Activated CD8-positive, alpha-beta T cell treated with anti-CD3 and anti-CD28 coated beads for 36 hours (primary cell): ENCODE measurements at regions of chr3 and their contacts with region 1.

Region 1: DNA sequence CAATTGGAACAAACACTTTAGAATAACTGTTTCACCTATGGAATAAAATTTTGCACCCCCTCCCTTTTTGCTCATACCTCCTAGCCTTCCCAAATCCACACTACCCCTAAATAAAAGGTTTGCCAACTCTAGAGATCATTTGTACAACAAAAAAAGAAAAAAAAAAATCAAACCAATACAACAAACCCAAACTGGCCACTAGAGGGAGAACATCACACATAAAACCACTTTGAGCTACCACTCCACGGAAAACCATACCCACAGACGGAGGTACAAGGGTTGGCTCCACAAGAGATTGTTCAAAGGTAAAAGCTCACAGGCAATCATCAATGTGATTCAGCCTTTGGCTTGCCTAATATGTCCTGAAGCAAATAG is 47.6 kb downstream of the SETMAR start:
- DNase-seq: peak; percentile 60
- ATAC-seq: peak; percentile 71
- H3K4me3 Mint-ChIP-seq: peak overlapping the region; percentile 67
- H3K27ac Mint-ChIP-seq: peak overlapping the region; percentile 40
- H3K4me1 Mint-ChIP-seq: peaks cover 19% of the 10 kb centered on the region
- H3K27me3 Mint-ChIP-seq: no peaks in the 10 kb centered on the region
- CTCF ChIP-seq: peak; percentile 93

Region 2: DNA sequence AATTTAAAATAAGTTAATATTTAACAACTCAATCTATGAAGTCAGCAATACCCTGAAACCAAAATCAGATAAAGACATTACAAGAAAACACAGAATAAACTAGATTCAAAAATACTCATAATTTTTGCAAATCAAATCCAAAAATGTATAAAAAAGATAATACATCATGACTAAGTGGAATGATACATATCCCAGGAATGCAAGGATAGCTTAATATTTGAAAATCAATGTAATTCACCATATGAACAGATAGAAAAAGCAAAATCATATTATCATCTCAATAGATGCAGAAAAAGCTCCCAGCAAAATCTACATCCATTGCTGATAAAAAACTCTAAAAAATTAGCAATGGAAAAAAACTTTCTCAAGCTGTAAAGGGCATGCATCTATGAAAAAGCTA is 22.9 kb after region 1 on chr3:
- CTCF ChIA-PET with region 1: interaction called, 13 read pairs
- POLR2A ChIA-PET with region 1: no interaction called
- intact Hi-C with region 1: no loop called
- DNase-seq: no peak
- ATAC-seq: no peak
- H3K4me3 Mint-ChIP-seq: no peak overlapping the region
- H3K27ac Mint-ChIP-seq: no peak overlapping the region
- H3K4me1 Mint-ChIP-seq: no peaks in the 10 kb centered on the region
- H3K27me3 Mint-ChIP-seq: no peaks in the 10 kb centered on the region
- CTCF ChIP-seq: no peak

Region 3: DNA sequence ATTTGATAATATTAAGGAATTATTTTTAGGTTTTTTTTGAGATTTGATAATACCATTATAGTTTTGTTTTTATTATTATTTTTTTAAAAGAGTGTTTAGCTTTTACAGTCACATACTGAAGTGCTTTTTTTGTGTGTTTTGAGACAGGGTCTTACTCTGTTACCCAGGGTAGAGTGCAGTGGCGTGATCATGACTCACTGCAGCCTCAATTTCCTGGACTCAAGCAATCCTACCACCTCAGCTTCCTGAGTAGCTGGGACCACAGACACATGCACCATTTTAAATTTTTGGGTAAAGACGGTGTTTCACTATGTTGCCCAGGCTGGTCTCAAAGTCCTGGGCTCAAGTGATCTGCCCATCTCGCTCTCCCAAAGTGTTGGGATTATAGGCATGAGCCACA is 43.3 kb after region 1 on chr3:
- CTCF ChIA-PET with region 1: interaction called, 13 read pairs
- POLR2A ChIA-PET with region 1: interaction called, 4 read pairs
- intact Hi-C with region 1: no loop called
- DNase-seq: peak; percentile 66
- ATAC-seq: peak; percentile 78
- H3K4me3 Mint-ChIP-seq: no peak overlapping the region
- H3K27ac Mint-ChIP-seq: peak overlapping the region; percentile 84
- H3K4me1 Mint-ChIP-seq: peaks cover 41% of the 10 kb centered on the region
- H3K27me3 Mint-ChIP-seq: no peaks in the 10 kb centered on the region
- CTCF ChIP-seq: no peak

Region 4: DNA sequence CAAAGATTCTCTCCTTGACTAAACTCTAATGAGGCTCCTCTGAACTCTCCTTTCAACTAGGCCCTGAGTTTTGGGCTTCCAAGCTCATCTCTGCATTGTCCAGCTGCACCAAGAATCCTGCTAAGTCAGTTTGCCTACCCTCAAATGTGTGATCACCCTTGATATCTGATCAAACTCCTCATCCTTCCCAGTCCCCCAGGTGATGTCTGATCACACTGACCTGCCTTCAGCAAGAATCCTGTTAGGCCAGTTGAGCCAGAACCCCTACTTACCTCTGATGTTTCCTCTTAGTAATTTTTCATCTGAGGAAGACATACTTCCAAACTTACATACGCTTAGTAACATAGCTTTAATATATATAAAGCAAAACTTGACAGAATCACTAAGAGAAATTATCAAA is 87.5 kb after region 1 on chr3:
- CTCF ChIA-PET with region 1: interaction called, 10 read pairs
- POLR2A ChIA-PET with region 1: interaction called, 4 read pairs
- intact Hi-C with region 1: no loop called
- DNase-seq: no peak
- ATAC-seq: no peak
- H3K4me3 Mint-ChIP-seq: no peak overlapping the region
- H3K27ac Mint-ChIP-seq: no peak overlapping the region
- H3K4me1 Mint-ChIP-seq: no peaks in the 10 kb centered on the region
- H3K27me3 Mint-ChIP-seq: no peaks in the 10 kb centered on the region
- CTCF ChIP-seq: no peak

Region 5: GRCh38 chr3:4584456-4585249 is 233.9 kb after region 1 on chr3:
- CTCF ChIA-PET with region 1: interaction called, 17 read pairs
- POLR2A ChIA-PET with region 1: no interaction called
- intact Hi-C with region 1: no loop called
- DNase-seq: peak; percentile 58
- ATAC-seq: peak; percentile 81
- H3K4me3 Mint-ChIP-seq: peak overlapping the region; percentile 70
- H3K27ac Mint-ChIP-seq: peak overlapping the region; percentile 89
- H3K4me1 Mint-ChIP-seq: peaks cover 78% of the 10 kb centered on the region
- H3K27me3 Mint-ChIP-seq: no peaks in the 10 kb centered on the region
- CTCF ChIP-seq: no peak